Right cardiac atrium (tissue), 5 donors: ENCODE measurements at regions of chr1 and their contacts with region 1.

Region 1: DNA sequence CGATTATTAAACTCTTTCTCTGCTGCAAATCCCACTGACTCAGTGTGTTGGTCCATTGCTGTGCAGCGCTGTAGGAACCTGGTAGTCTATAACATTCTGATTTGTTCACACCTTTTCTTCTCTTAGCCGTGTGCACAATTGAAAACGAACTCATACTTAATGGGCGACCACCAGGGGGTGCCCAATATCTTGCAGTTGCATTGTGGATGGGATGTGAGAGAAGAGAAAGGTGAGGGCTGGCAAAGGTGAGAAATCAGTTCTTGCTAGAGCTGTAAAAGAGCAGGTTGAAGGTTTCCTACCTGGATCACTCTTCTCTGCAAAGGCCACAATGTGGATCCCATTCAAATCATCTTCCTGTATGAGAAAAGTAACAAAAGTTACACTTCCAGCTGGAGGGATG is 51.0 kb downstream of the CASQ2 start:
- DNase-seq: peak in 2 of 3 donors; percentile 50 to 84
- ATAC-seq: no peak
- H3K4me3 ChIP-seq: no peak overlapping the region
- H3K27ac ChIP-seq: no peak overlapping the region
- H3K4me1 ChIP-seq: no peaks in the 10 kb centered on the region
- H3K27me3 ChIP-seq: no peaks in the 10 kb centered on the region

Region 2: GRCh38 chr1:115330480-115331013 is 387.0 kb before region 1 on chr1:
- intact Hi-C with region 1: no loop called
- DNase-seq: no peak
- ATAC-seq: peak in 1 of 2 donors; percentile 14
- H3K4me3 ChIP-seq: no peak overlapping the region
- H3K27ac ChIP-seq: no peak overlapping the region
- H3K4me1 ChIP-seq: peaks cover 6% of the 10 kb centered on the region
- H3K27me3 ChIP-seq: no peaks in the 10 kb centered on the region

Region 3: GRCh38 chr1:115764541-115764940 is 47.0 kb after region 1 on chr1:
- intact Hi-C with region 1: loop called (anchors 5 to 10 kb)
- DNase-seq: no peak
- ATAC-seq: peak in 1 of 2 donors; percentile 8
- H3K4me3 ChIP-seq: peak overlapping the region; percentile 37
- H3K27ac ChIP-seq: no peak overlapping the region
- H3K4me1 ChIP-seq: no peaks in the 10 kb centered on the region
- H3K27me3 ChIP-seq: no peaks in the 10 kb centered on the region